ENCODE measurements at regions of chr6 and their contacts with region 1.

Region 1: GRCh38 chr6:75524322-75524972 is 30.8 kb upstream of the FILIP1 start:
- DNase-seq: peak; percentile 36

Region 2: DNA sequence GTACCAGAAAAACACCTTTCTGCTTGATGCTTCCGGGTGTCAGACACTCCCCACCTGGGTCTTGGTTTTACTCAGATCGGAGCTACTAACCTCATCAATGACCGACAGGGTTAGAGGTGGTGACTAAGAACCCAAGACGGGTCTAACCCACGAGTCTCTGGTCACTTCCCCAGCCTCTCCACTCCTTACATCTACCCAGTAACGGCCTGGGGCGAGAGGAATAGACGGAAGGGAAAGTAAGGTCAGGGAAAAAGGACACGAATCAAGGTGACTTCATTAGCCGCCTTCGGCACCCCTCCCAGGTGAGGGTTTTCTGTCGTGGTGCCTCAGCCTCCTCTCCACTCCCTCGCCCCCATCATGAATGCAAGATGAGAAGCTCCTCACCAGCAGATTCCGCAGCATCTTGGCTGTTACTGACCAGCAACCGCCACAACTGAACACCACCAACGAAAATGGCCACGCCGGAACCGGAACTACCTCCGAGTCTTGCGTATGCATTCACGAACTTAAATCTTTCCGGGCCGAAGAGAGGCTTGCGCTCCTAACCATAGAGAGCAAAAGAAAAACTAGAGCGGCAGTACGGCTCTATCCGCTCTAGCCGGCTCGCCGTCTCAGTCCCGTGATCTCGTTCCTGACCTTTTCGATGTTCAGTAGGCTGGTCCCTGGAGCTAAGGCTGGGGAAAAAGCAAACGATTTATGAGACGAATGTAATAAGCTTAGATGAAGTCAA is 280.9 kb before region 1 on chr6 and contains the start of gene COX7A2:
- CTCF ChIA-PET with region 1: no interaction called
- POLR2A ChIA-PET with region 1: interaction called, 11 read pairs
- DNase-seq: peak; percentile 86

Region 3: DNA sequence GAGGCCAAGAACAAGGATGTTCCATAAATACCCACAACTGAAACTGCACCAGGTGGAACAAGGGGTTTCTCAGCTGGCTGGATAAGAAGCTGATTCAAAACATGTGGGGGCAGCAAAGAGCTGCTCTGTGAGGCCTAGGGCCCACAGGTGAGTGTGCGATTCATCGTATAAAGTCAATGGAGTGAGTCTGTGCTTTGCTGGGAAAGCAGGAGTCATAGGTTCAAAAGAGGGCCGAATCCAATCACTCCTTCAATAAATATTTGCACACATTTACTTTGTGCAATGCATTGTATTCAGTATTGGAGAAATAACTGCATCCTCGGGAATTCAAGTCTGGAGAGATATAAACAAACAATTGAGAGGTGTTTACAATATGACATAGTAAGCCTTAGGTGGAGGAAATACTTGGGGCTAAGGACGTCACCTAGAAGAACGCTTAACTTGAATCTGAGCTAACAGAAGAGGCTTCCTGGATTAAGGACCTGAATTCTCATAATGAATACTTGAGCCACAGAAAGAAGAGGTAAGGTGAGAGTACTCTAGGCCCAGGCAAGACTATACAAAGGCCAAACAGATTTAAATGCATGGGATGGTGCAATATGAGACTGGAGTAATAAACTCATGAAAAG is 156.2 kb before region 1 on chr6:
- CTCF ChIA-PET with region 1: interaction called, 16 read pairs
- POLR2A ChIA-PET with region 1: no interaction called
- DNase-seq: peak; percentile 47

Region 4: GRCh38 chr6:75504465-75505228 is 19.8 kb before region 1 on chr6:
- CTCF ChIA-PET with region 1: no interaction called
- POLR2A ChIA-PET with region 1: no interaction called
- DNase-seq: no peak

Region 5: DNA sequence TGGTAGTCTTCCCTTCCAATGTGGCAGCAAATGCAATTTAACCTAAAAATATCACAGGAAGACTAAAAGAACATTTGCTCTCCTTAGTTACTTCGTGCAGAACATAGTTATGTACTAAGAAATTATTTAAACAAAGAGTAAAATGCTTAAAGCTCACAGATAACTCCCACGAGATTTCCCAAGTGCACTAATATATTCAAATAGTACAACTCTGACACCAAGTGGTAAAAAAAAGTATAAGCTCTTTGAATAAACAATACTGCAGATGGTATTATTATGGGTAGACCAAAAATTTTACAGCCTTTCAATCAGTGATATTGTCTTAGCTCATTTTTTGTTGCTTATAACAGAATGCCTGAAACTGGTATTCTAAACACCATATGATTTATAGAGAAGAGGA is 21.9 kb after region 1 on chr6:
- CTCF ChIA-PET with region 1: interaction called, 10 read pairs
- POLR2A ChIA-PET with region 1: no interaction called
- DNase-seq: no peak

Measured in HEK293T (cell line).